OCI-LY7 (cell line): ENCODE measurements at regions of chr7 and their contacts with region 1.

Region 1: GRCh38 chr7:18590744-18591340 is 95.3 kb downstream of the HDAC9 start:
- DNase-seq: peak; percentile 43
- H3K4me3 ChIP-seq: no peak overlapping the region
- H3K27ac ChIP-seq: no peak overlapping the region
- H3K4me1 ChIP-seq: peaks cover 19% of the 10 kb centered on the region
- CTCF ChIP-seq: peak; percentile 82

Region 2: GRCh38 chr7:18655912-18656311 is 65.1 kb after region 1 on chr7:
- CTCF ChIA-PET with region 1: no interaction called
- POLR2A ChIA-PET with region 1: no interaction called
- intact Hi-C with region 1: no loop called
- DNase-seq: no peak
- H3K4me3 ChIP-seq: no peak overlapping the region
- H3K27ac ChIP-seq: no peak overlapping the region
- H3K4me1 ChIP-seq: no peaks in the 10 kb centered on the region
- CTCF ChIP-seq: no peak

Region 3: DNA sequence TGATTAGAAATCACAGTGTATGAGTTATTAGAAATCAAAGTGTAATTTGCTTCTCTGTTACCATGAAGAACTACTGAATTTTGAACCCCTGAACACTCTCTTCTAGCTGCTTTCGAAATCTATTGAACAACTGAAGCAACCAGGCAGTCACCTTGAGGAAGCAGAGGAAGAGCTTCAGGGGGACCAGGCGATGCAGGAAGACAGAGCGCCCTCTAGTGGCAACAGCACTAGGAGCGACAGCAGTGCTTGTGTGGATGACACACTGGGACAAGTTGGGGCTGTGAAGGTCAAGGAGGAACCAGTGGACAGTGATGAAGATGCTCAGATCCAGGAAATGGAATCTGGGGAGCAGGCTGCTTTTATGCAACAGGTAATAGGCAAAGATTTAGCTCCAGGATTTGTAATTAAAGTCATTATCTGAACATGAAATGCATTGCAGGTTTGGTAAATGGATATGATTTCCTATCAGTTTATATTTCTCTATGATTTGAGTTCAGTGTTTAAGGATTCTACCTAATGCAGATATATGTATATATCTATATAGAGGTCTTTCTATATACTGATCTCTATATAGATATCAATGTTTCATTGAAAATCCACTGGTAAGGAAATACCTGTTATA is 75.4 kb after region 1 on chr7:
- CTCF ChIA-PET with region 1: no interaction called
- POLR2A ChIA-PET with region 1: no interaction called
- intact Hi-C with region 1: loop called (anchors 5 kb)
- DNase-seq: peak; percentile 85
- H3K4me3 ChIP-seq: no peak overlapping the region
- H3K27ac ChIP-seq: no peak overlapping the region
- H3K4me1 ChIP-seq: peaks cover 11% of the 10 kb centered on the region
- CTCF ChIP-seq: peak; percentile 100